CD8-positive, alpha-beta memory T cell (primary cell): ENCODE measurements at regions of chr18 and their contacts with region 1.

Region 1: DNA sequence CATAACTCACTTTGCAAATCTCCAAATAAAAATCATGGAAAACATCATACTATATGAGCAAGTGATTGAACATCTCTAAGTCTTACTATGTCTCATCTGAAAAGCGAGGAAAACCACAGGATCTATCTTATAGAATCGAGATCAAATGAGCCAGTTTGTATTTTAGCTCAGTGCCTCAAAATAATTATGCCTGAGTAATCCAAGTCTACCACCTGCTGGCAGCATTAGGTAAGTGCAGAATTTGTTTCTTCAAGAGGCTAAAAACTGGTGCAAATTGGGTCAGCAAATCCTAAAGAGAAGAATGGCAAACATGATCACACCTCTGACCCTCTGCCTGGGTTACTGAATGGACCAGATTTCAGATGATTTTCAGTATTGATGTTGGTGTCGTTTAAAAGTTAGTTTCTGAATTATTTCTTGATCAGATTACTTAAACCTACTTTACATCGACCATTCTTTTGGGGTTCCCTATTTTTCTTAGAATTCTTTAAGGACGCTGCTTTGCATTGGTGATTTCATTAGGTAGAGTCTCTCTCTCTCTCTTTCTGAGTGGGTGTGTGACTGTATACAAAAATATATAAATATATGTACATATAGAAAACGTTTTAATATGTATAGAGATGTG is 12.7 kb upstream of the FHOD3 start:
- DNase-seq: peak in 4 of 5 donors; percentile 26 to 59 (median 42)
- H3K4me3 ChIP-seq: no peak overlapping the region
- H3K4me3 Mint-ChIP-seq: no peak overlapping the region
- H3K27ac ChIP-seq: no peak overlapping the region
- H3K27ac Mint-ChIP-seq: no peak overlapping the region
- H3K4me1 ChIP-seq: no peaks in the 10 kb centered on the region
- H3K4me1 Mint-ChIP-seq: no peaks in the 10 kb centered on the region
- H3K27me3 ChIP-seq: no peaks in the 10 kb centered on the region
- H3K27me3 Mint-ChIP-seq: peaks cover 15 to 52% of the 10 kb centered on the region in 2 donors

Region 2: GRCh38 chr18:35756506-35757117 is 528.2 kb before region 1 on chr18:
- CTCF ChIA-PET with region 1: interaction called, 11 read pairs
- POLR2A ChIA-PET with region 1: no interaction called
- DNase-seq: peak; percentile 20 to 55 (median 44)
- H3K4me3 ChIP-seq: no peak overlapping the region
- H3K4me3 Mint-ChIP-seq: no peak overlapping the region
- H3K27ac ChIP-seq: no peak overlapping the region
- H3K27ac Mint-ChIP-seq: no peak overlapping the region
- H3K4me1 ChIP-seq: no peaks in the 10 kb centered on the region
- H3K4me1 Mint-ChIP-seq: no peaks in the 10 kb centered on the region
- H3K27me3 ChIP-seq: no peaks in the 10 kb centered on the region
- H3K27me3 Mint-ChIP-seq: peaks cover 23 to 50% of the 10 kb centered on the region in 2 donors

Region 3: GRCh38 chr18:36015629-36016028 is 269.2 kb before region 1 on chr18:
- CTCF ChIA-PET with region 1: interaction called, 82 read pairs
- POLR2A ChIA-PET with region 1: no interaction called
- DNase-seq: no peak
- H3K4me3 ChIP-seq: no peak overlapping the region
- H3K4me3 Mint-ChIP-seq: no peak overlapping the region
- H3K27ac ChIP-seq: no peak overlapping the region
- H3K27ac Mint-ChIP-seq: no peak overlapping the region
- H3K4me1 ChIP-seq: no peaks in the 10 kb centered on the region
- H3K4me1 Mint-ChIP-seq: peaks cover 0 to 5% (median 4%) of the 10 kb centered on the region in 3 donors
- H3K27me3 ChIP-seq: no peaks in the 10 kb centered on the region
- H3K27me3 Mint-ChIP-seq: no peaks in the 10 kb centered on the region

Region 4: DNA sequence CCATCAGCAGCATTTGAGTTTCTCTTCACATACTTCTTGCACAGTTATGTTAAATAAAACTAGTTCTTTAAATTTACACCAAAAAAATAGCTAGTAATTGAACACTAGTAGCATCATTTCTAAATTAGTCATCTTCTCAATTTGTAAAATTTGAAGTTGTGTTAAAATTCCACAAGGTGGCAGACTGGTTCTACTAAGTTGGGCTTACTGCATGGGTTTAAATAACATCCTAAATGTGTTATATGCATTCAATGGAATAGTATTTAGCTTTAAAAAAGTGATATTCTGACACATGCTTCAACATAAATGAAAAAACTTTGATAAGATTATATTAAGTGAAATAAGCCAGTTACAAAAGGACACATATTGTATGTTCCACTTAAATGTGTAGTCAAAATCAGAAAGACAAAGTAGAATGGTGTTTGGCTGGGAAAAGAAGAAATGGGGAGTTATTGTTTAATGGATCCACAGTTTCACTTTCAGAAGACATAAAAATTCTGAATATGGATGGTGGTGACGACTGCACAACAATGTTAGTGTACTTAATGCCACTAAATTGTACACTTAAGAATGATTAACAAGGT is 188.8 kb before region 1 on chr18:
- CTCF ChIA-PET with region 1: interaction called, 26 read pairs
- POLR2A ChIA-PET with region 1: no interaction called
- DNase-seq: peak in 2 of 5 donors; percentile 30 to 31
- H3K4me3 ChIP-seq: no peak overlapping the region
- H3K4me3 Mint-ChIP-seq: no peak overlapping the region
- H3K27ac ChIP-seq: no peak overlapping the region
- H3K27ac Mint-ChIP-seq: no peak overlapping the region
- H3K4me1 ChIP-seq: no peaks in the 10 kb centered on the region
- H3K4me1 Mint-ChIP-seq: peaks cover 12 to 15% (median 12%) of the 10 kb centered on the region in 3 donors
- H3K27me3 ChIP-seq: no peaks in the 10 kb centered on the region
- H3K27me3 Mint-ChIP-seq: peaks cover 7 to 8% of the 10 kb centered on the region in 2 donors